ENCODE measurements at regions of chr1 and their contacts with region 1.

Region 1: GRCh38 chr1:205121660-205122488 is at the start of gene RBBP5:
- DNase-seq: peak; percentile 94 to 98 (median 95)
- H3K4me3 ChIP-seq: peak within 1 kb of the TSS; percentile 76 to 97
- H3K4me3 Mint-ChIP-seq: peak within 1 kb of the TSS; percentile 92 to 99 (median 98)
- H3K27ac ChIP-seq: peak within 1 kb of the TSS; percentile 90
- H3K27ac Mint-ChIP-seq: peak within 1 kb of the TSS; percentile 95 to 100 (median 100)
- H3K4me1 ChIP-seq: peaks cover 41% of the 10 kb centered on the region
- H3K4me1 Mint-ChIP-seq: peaks cover 31 to 59% (median 44%) of the 10 kb centered on the region in 4 donors
- H3K27me3 ChIP-seq: no peaks in the 10 kb centered on the region
- H3K27me3 Mint-ChIP-seq: no peaks in the 10 kb centered on the region
- total RNA-seq, gene RBBP5: 32.4 to 32.9 TPM

Region 2: DNA sequence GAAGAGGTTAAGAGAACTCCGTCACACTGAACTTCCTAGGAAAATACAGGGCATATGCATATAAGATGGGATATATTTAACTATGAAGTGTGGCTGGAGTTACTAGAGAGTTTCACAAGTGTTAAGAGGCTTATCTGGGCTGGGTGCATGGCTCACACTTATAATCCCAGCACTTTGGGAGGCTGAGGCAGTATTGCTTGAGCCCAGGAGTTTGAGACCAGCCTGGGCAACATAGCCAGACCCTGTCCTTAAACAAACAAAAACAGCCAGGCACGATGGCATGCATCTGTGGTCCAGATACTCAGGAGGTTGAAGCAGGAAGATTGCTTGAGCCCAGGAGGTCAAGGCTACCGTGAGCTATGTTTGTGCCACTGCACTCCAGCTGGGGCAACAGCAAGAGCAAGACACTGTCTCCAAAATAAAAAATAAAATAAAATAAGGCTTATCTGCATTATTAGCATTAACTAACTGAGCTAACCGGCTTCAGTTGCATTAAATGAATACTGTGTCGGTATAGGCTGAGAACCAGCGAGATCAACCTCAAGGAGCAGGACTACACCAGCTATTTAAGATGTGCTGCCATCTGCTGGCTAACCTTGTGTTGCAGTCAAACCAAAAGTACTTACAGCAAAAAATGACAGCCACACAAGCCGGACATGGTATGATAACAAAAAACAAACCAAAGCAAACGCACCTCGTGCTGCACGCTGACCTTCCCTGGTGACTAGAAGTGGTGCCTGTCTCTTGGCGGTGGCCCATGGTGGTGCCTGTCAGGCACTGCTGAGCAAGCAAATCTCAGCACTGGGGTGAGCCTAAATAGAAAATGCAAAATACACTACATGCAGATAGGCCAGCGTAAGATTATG is 19.6 kb after region 1 on chr1:
- CTCF ChIA-PET with region 1: interaction called, 53 read pairs
- POLR2A ChIA-PET with region 1: interaction called, 11 read pairs
- intact Hi-C with region 1: loop called (anchors 1 kb)
- DNase-seq: peak; percentile 53 to 73 (median 64)
- H3K4me3 ChIP-seq: no peak overlapping the region
- H3K4me3 Mint-ChIP-seq: peak overlapping the region in 5 of 8 donors; percentile 8 to 68 (median 62)
- H3K27ac ChIP-seq: no peak overlapping the region
- H3K27ac Mint-ChIP-seq: peak overlapping the region in 1 of 7 donors; percentile 1
- H3K4me1 ChIP-seq: peaks cover 11% of the 10 kb centered on the region
- H3K4me1 Mint-ChIP-seq: peaks cover 4 to 11% (median 6%) of the 10 kb centered on the region in 4 donors
- H3K27me3 ChIP-seq: no peaks in the 10 kb centered on the region
- H3K27me3 Mint-ChIP-seq: no peaks in the 10 kb centered on the region

Region 3: GRCh38 chr1:205227584-205228006 is 105.7 kb after region 1 on chr1 and contains the start of gene TMCC2:
- CTCF ChIA-PET with region 1: interaction called, 12 read pairs
- POLR2A ChIA-PET with region 1: interaction called, 19 read pairs
- intact Hi-C with region 1: loop called (anchors 5 kb)
- DNase-seq: peak; percentile 67 to 79 (median 70)
- H3K4me3 ChIP-seq: peak within 1 kb of the TSS; percentile 54 to 57
- H3K4me3 Mint-ChIP-seq: peak within 1 kb of the TSS; percentile 88 to 99 (median 94)
- H3K27ac ChIP-seq: no peak within 1 kb of the TSS
- H3K27ac Mint-ChIP-seq: peak within 1 kb of the TSS; percentile 53 to 97 (median 85)
- H3K4me1 ChIP-seq: peaks cover 25% of the 10 kb centered on the region
- H3K4me1 Mint-ChIP-seq: peaks cover 14 to 33% (median 23%) of the 10 kb centered on the region in 4 donors
- H3K27me3 ChIP-seq: peaks cover 5% of the 10 kb centered on the region
- H3K27me3 Mint-ChIP-seq: peaks cover 8 to 18% of the 10 kb centered on the region in 2 donors
- total RNA-seq, gene TMCC2: 0.90 to 1.2 TPM

Region 4: DNA sequence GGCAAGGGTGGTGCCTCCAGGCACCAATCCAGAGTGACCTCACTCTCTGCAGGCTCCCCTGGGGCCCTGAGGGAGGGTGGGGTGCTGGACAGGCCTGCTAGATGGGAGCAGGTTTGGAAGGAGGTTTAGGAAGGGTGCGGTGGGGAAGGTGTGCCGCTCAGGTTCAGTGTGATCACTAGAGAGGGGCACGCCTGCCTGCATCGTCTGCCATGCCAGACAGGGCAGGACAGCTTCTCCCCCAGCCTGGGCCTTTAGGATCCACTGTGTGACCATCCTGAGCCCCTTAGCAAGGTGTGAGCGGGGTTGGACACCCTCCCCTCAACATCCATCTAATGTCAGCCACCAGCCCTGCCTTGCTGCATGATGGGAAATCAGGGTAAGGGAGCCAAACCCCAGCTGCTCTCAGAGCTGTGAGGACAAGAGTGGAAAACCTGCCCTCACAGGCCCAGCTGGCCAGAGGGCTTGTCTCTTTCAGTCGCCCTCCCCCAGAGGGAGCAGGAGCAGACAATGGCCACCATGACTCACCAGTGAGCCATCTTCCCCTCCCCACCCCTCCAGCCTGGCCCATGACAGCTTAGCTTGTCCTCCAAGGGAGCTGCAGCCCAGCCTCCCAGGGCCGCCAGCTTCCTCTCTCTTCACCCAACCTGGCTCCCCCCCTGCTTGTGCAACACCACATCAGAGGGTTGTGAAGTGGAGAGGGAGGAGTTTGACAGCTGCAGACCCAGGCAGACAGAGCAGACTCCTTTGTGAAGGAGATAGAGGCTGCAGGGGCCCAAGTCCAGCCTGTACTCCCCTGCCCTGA is 162.7 kb after region 1 on chr1:
- CTCF ChIA-PET with region 1: no interaction called
- POLR2A ChIA-PET with region 1: interaction called, 3 read pairs
- intact Hi-C with region 1: loop called (anchors 1 kb)
- DNase-seq: peak; percentile 88 to 97 (median 90)
- H3K4me3 ChIP-seq: peak overlapping the region; percentile 56 to 71
- H3K4me3 Mint-ChIP-seq: peak overlapping the region; percentile 74 to 89 (median 84)
- H3K27ac ChIP-seq: peak overlapping the region; percentile 62
- H3K27ac Mint-ChIP-seq: peak overlapping the region; percentile 86 to 98 (median 95)
- H3K4me1 ChIP-seq: peaks cover 87% of the 10 kb centered on the region
- H3K4me1 Mint-ChIP-seq: peaks cover 64 to 89% (median 78%) of the 10 kb centered on the region in 4 donors
- H3K27me3 ChIP-seq: no peaks in the 10 kb centered on the region
- H3K27me3 Mint-ChIP-seq: no peaks in the 10 kb centered on the region

Region 5: GRCh38 chr1:205313563-205314308 is 191.9 kb after region 1 on chr1:
- CTCF ChIA-PET with region 1: no interaction called
- POLR2A ChIA-PET with region 1: no interaction called
- intact Hi-C with region 1: no loop called
- DNase-seq: peak in 2 of 5 donors; percentile 18 to 54
- H3K4me3 ChIP-seq: peak overlapping the region; percentile 17 to 20
- H3K4me3 Mint-ChIP-seq: peak overlapping the region; percentile 82 to 93 (median 86)
- H3K27ac ChIP-seq: peak overlapping the region; percentile 2
- H3K27ac Mint-ChIP-seq: peak overlapping the region; percentile 81 to 95 (median 88)
- H3K4me1 ChIP-seq: peaks cover 86% of the 10 kb centered on the region
- H3K4me1 Mint-ChIP-seq: peaks cover 66 to 95% (median 78%) of the 10 kb centered on the region in 4 donors
- H3K27me3 ChIP-seq: no peaks in the 10 kb centered on the region
- H3K27me3 Mint-ChIP-seq: no peaks in the 10 kb centered on the region

Region 6: GRCh38 chr1:205407970-205408369 is 286.1 kb after region 1 on chr1:
- CTCF ChIA-PET with region 1: no interaction called
- POLR2A ChIA-PET with region 1: no interaction called
- intact Hi-C with region 1: no loop called
- DNase-seq: no peak
- H3K4me3 ChIP-seq: no peak overlapping the region
- H3K4me3 Mint-ChIP-seq: peak overlapping the region in 1 of 8 donors; percentile 46
- H3K27ac ChIP-seq: no peak overlapping the region
- H3K27ac Mint-ChIP-seq: no peak overlapping the region
- H3K4me1 ChIP-seq: peaks cover 15% of the 10 kb centered on the region
- H3K4me1 Mint-ChIP-seq: peaks cover 12 to 18% (median 14%) of the 10 kb centered on the region in 4 donors
- H3K27me3 ChIP-seq: no peaks in the 10 kb centered on the region
- H3K27me3 Mint-ChIP-seq: peaks cover 1 to 2% of the 10 kb centered on the region in 2 donors

Region 7: DNA sequence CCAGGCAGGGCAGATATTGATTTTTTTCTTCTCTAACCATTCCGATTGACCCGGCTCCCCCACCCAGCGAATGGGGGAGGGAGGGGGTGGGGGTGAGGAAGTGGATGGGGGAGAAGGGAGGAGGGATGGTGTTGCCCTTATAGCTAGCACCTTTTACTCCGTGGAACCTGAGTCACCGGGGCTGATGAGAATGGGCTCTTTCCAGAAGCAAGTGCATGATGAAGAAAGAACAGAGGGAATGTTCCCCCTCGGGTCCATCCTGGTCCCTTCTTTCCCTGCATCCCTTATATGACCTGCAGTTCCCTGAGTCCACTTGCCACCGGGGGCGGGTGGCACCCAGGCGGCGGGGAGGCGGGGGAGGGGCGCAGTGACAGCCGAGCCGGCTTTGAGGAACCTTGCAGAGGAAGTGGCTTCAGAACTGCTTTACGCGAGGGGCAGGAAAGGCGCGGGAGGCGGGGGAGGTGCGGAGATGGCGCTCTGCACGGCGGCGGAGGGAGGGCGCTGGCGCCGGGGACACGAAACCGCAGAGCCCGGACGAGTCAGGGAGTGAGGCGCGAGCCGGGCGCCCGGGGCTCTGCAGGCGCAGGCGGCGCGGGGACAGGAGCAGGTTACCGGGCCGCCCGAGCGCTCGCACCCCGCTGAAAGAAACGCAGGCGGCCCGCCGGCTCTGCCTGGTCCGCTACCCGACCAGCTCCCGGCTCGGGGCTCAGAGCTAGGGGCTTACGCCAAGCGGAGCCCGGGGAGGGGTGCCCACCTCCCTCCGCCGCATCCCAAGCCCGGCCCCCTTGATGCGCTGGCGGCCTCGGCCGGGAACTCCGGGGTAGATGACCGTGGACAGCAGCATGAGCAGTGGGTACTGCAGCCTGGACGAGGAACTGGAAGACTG is 1435.1 kb after region 1 on chr1:
- CTCF ChIA-PET with region 1: no interaction called
- POLR2A ChIA-PET with region 1: no interaction called
- intact Hi-C with region 1: loop called (anchors 10 kb)
- DNase-seq: peak; percentile 87 to 93 (median 90)
- H3K4me3 ChIP-seq: peak overlapping the region; percentile 95 to 96
- H3K4me3 Mint-ChIP-seq: peak overlapping the region; percentile 90 to 99 (median 98)
- H3K27ac ChIP-seq: peak overlapping the region; percentile 77
- H3K27ac Mint-ChIP-seq: peak overlapping the region; percentile 93 to 98 (median 96)
- H3K4me1 ChIP-seq: peaks cover 76% of the 10 kb centered on the region
- H3K4me1 Mint-ChIP-seq: peaks cover 49 to 93% (median 63%) of the 10 kb centered on the region in 4 donors
- H3K27me3 ChIP-seq: no peaks in the 10 kb centered on the region
- H3K27me3 Mint-ChIP-seq: no peaks in the 10 kb centered on the region